ENCODE measurements at regions of chr4 and their contacts with region 1.

Region 1: DNA sequence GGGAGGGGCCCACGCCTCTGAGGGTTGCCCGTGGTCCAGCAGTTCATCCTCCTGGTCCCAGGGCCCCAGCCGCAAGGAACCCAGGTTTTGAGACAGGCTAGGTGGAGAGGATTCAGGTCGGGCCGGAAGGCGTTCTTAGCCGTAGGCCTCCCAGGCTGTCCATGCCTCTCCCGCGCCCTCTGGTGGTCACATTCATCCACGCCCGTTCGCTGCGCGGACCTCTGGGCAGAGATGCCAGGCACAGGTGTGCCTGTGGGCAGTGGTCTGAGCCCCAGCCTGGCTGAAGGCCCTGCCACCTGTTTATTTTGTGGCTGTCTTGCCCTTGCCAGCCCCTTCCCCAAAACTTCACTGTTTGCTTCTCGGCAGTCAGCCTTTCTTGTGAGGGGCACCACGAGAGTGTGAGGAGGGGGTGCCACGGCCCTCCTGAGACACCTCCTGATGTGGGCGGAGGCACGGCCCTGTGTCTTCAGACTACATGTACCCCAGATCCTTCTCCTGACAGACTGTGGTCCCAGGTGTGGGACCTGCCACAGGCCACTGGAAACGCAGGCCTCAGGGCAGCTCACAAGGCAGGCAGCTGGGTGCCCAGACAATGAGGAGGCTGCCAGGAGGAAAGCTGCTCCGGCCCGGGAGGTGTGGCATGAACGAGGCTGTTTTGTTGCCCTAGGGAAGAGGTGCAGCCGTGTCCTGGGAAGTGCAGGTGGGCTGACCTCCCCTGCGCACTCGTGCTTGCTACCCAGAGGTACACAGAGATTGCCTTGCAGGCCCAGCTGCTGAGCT is 5.0 kb downstream of the UVSSA start:
- DNase-seq: peak; percentile 67 to 86
- H3K4me3 ChIP-seq: no peak overlapping the region
- H3K27ac ChIP-seq: no peak overlapping the region
- H3K4me1 ChIP-seq: peaks cover 11% of the 10 kb centered on the region
- H3K27me3 ChIP-seq: no peaks in the 10 kb centered on the region
- CTCF ChIP-seq: peak; percentile 90

Region 2: GRCh38 chr4:1033840-1034551 is 318.0 kb before region 1 on chr4:
- CTCF ChIA-PET with region 1: no interaction called
- POLR2A ChIA-PET with region 1: no interaction called
- intact Hi-C with region 1: loop called (anchors 5 kb)
- DNase-seq: no peak
- H3K4me3 ChIP-seq: no peak overlapping the region
- H3K27ac ChIP-seq: no peak overlapping the region
- H3K4me1 ChIP-seq: peaks cover 2% of the 10 kb centered on the region; the same call in 1 of the 2 replicates
- H3K27me3 ChIP-seq: peaks cover 19% of the 10 kb centered on the region
- CTCF ChIP-seq: no peak

Region 3: GRCh38 chr4:1604711-1605205 is 252.7 kb after region 1 on chr4:
- CTCF ChIA-PET with region 1: no interaction called
- POLR2A ChIA-PET with region 1: no interaction called
- intact Hi-C with region 1: loop called (anchors 10 kb)
- DNase-seq: peak in 1 of 2 experiments; percentile 61
- H3K4me3 ChIP-seq: no peak overlapping the region
- H3K27ac ChIP-seq: no peak overlapping the region
- H3K4me1 ChIP-seq: peaks cover 6% of the 10 kb centered on the region; the same call in 1 of the 2 replicates
- H3K27me3 ChIP-seq: peaks cover 38% of the 10 kb centered on the region
- CTCF ChIP-seq: peak; percentile 32; the same call in 1 of the 2 replicates

Measured in PC-9 (cell line).